SK-N-SH (cell line): ENCODE measurements at regions of chr17 and their contacts with region 1.

Region 1: GRCh38 chr17:74493381-74493833 is 27.0 kb downstream of the CD300A start:
- DNase-seq: peak; percentile 81
- H3K4me3 ChIP-seq: no peak overlapping the region; a peak in 1 of 4 replicates
- H3K27ac ChIP-seq: no peak overlapping the region
- H3K4me1 ChIP-seq: no peaks in the 10 kb centered on the region
- H3K27me3 ChIP-seq: no peaks in the 10 kb centered on the region
- CTCF ChIP-seq: peak; percentile 74
- EP300 ChIP-seq: no peak
- RAD21 ChIP-seq: peak; percentile 94

Region 2: DNA sequence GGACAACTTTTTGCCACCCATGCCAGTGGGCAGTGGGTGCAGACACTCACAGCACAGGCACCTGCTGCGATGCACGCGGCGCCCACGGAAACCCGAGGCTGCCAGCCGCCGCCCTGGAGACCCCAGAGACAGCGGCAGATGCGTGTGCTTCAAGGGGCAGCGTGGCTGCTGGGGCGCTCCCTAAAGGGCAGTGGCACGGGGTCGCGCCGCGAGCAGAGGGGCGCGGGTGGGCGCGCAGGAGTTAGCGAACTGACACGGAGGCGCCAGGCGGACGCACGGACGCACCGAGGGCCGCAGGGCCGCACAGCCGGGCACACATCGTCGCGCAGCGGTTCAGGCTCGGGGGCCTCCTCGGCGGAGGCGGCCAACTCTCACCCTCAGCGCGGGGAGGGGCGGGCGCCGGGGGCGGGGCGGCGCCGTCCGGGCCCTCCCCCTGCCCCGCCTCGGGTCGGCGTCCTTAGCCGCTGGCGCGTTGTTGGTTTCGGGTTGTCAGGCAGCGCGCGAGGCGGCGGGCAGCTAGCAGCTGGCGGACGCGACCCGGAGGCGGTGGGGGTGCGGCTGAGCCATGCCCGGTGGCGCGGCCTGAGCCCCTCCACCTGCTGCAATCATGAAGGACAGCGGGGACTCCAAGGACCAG is 167.5 kb before region 1 on chr17 and contains the start of gene KIF19:
- CTCF ChIA-PET with region 1: no interaction called
- POLR2A ChIA-PET with region 1: no interaction called
- DNase-seq: peak; percentile 91
- H3K4me3 ChIP-seq: peak within 1 kb of the TSS in 1 of 2 experiments; percentile 12; a peak in 1 of 4 replicates
- H3K27ac ChIP-seq: no peak within 1 kb of the TSS
- H3K4me1 ChIP-seq: peaks cover 0 to 3% of the 10 kb centered on the region in 2 experiments; a peak in 1 of 4 replicates
- H3K27me3 ChIP-seq: no peaks in the 10 kb centered on the region
- CTCF ChIP-seq: no peak
- EP300 ChIP-seq: no peak
- RAD21 ChIP-seq: no peak
- polyA plus RNA-seq, gene KIF19: not detected in 2 replicates

Region 3: GRCh38 chr17:74427048-74427762 is 66.2 kb before region 1 on chr17:
- CTCF ChIA-PET with region 1: no interaction called
- POLR2A ChIA-PET with region 1: no interaction called
- DNase-seq: no peak
- H3K4me3 ChIP-seq: no peak overlapping the region
- H3K27ac ChIP-seq: no peak overlapping the region
- H3K4me1 ChIP-seq: peaks cover 0 to 11% of the 10 kb centered on the region in 2 experiments; a peak in 1 of 4 replicates
- H3K27me3 ChIP-seq: no peaks in the 10 kb centered on the region
- CTCF ChIP-seq: no peak
- EP300 ChIP-seq: no peak
- RAD21 ChIP-seq: no peak

Region 4: GRCh38 chr17:74478420-74479100 is 14.8 kb before region 1 on chr17:
- CTCF ChIA-PET with region 1: interaction called, 17 read pairs
- POLR2A ChIA-PET with region 1: no interaction called
- DNase-seq: peak; percentile 12
- H3K4me3 ChIP-seq: no peak overlapping the region
- H3K27ac ChIP-seq: no peak overlapping the region
- H3K4me1 ChIP-seq: no peaks in the 10 kb centered on the region
- H3K27me3 ChIP-seq: no peaks in the 10 kb centered on the region
- CTCF ChIP-seq: no peak
- EP300 ChIP-seq: no peak
- RAD21 ChIP-seq: no peak

Region 5: DNA sequence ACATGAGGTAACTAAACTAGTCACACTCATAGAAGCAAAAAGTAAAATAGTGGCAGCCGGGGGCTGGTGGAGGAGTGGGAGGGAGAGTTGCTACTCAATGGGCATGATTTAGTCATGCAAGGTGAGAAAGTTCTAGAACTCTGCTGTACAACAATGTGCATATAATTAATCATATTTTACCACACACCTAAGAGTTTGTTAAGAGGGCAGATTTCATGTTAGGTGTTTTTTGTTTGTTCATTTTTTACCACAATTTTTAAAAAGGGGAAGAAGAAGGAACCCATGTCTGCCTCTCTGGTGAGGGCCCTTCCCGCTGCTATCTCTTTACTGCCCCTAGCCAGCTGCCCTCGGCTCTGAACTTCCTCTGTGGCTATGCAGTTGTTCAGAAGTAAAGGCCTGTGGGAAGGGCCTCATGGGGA is 26.6 kb after region 1 on chr17:
- CTCF ChIA-PET with region 1: no interaction called
- POLR2A ChIA-PET with region 1: no interaction called
- DNase-seq: no peak
- H3K4me3 ChIP-seq: no peak overlapping the region
- H3K27ac ChIP-seq: no peak overlapping the region
- H3K4me1 ChIP-seq: no peaks in the 10 kb centered on the region
- H3K27me3 ChIP-seq: no peaks in the 10 kb centered on the region
- CTCF ChIP-seq: no peak
- EP300 ChIP-seq: no peak
- RAD21 ChIP-seq: no peak